Activated CD4-positive, alpha-beta T cell treated with anti-CD3 and anti-CD28 coated beads, Interleukin-2, amount 10 ng/mL, durations not matched to agents 24 days and 14 days (primary cell): ENCODE measurements at regions of chr1 and their contacts with region 1.

Region 1: GRCh38 chr1:217630711-217631591 is at the starts of genes GPATCH2 and SPATA17:
- DNase-seq: peak; percentile 94
- H3K4me3 Mint-ChIP-seq: peak within 1 kb of the TSS; percentile 95
- H3K27ac Mint-ChIP-seq: peak within 1 kb of the TSS; percentile 99
- H3K4me1 Mint-ChIP-seq: peaks cover 16% of the 10 kb centered on the region
- H3K27me3 Mint-ChIP-seq: peaks cover 8% of the 10 kb centered on the region
- total RNA-seq, gene GPATCH2: 9.9 and 12.1 TPM in 2 replicates
- total RNA-seq, gene SPATA17: not detected in 2 replicates

Region 2: DNA sequence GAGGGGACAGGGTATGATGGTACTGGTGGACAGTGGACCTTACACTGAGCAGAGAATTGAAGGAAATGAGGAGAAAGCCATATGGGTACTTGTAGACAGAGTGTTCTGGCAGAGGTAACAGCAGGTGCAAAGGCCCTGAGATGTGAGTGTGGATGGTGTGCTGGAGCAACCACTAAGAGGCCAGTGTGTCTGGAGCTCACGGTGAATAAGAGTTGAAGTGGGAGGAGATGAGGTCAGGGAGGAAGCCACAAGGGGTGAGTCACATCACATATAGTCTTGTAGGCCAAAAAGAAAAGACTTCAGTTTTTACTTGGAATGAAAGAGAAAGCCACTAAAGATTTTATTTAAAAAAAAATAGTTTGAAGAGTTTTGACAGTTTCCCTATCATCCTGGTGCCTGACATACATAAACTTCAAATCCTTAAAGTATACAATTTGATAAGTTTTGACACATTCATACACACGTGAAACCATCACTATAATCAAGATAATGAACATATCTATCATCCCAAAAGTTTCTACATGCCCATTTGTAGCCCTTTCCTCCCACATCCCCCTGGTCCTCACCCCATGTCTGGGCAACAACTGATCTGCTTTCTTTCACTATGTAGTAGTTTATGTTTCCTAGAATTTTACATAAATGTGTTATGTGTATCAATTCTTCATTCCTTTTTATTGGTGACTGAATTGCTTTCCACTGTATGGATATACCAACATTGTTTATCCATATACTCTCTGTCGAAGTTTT is 148.4 kb before region 1 on chr1:
- intact Hi-C with region 1: loop called (anchors 1 kb)
- DNase-seq: peak; percentile 84
- H3K4me3 Mint-ChIP-seq: peak overlapping the region; percentile 46
- H3K27ac Mint-ChIP-seq: peak overlapping the region; percentile 76
- H3K4me1 Mint-ChIP-seq: peaks cover 28% of the 10 kb centered on the region
- H3K27me3 Mint-ChIP-seq: no peaks in the 10 kb centered on the region

Region 3: GRCh38 chr1:217534566-217534965 is 96.4 kb before region 1 on chr1:
- intact Hi-C with region 1: no loop called
- DNase-seq: no peak
- H3K4me3 Mint-ChIP-seq: no peak overlapping the region
- H3K27ac Mint-ChIP-seq: no peak overlapping the region
- H3K4me1 Mint-ChIP-seq: no peaks in the 10 kb centered on the region
- H3K27me3 Mint-ChIP-seq: no peaks in the 10 kb centered on the region

Region 4: GRCh38 chr1:217620814-217621213 is 10.1 kb before region 1 on chr1:
- intact Hi-C with region 1: loop called (anchors 1 kb)
- DNase-seq: no peak
- H3K4me3 Mint-ChIP-seq: no peak overlapping the region
- H3K27ac Mint-ChIP-seq: no peak overlapping the region
- H3K4me1 Mint-ChIP-seq: peaks cover 18% of the 10 kb centered on the region
- H3K27me3 Mint-ChIP-seq: no peaks in the 10 kb centered on the region

Region 5: GRCh38 chr1:218284934-218285635 is 654.1 kb after region 1 on chr1 and contains the start of gene RRP15:
- intact Hi-C with region 1: loop called (anchors 1 kb)
- DNase-seq: peak; percentile 96
- H3K4me3 Mint-ChIP-seq: peak within 1 kb of the TSS; percentile 93
- H3K27ac Mint-ChIP-seq: peak within 1 kb of the TSS; percentile 89
- H3K4me1 Mint-ChIP-seq: peaks cover 19% of the 10 kb centered on the region
- H3K27me3 Mint-ChIP-seq: peaks cover 7% of the 10 kb centered on the region
- total RNA-seq, gene RRP15: 41.0 and 44.7 TPM in 2 replicates